Dorsolateral prefrontal cortex (tissue), 120 donors: ENCODE measurements at regions of chr22 and their contacts with region 1.

Region 1: GRCh38 chr22:42780070-42780540 is 59.4 kb upstream of the A4GALT start:
- DNase-seq: peak in 3 of 10 donors; percentile 25 to 66 (median 53)
- H3K4me3 ChIP-seq: no peak overlapping the region
- H3K27ac ChIP-seq: peak overlapping the region in 2 of 59 donors; percentile 27 to 56
- H3K27me3 ChIP-seq: no peaks in the 10 kb centered on the region
- CTCF ChIP-seq: peak; percentile 67 to 91 (median 83)

Region 2: GRCh38 chr22:42820066-42820763 is 40.1 kb after region 1 on chr22:
- intact Hi-C with region 1: loop called in 1 of 2 experiments (anchors 5 kb)
- DNase-seq: no peak
- H3K4me3 ChIP-seq: no peak overlapping the region
- H3K27ac ChIP-seq: peak overlapping the region in 8 of 59 donors; percentile 0 to 44 (median 9)
- H3K27me3 ChIP-seq: no peaks in the 10 kb centered on the region
- CTCF ChIP-seq: peak in 45 of 56 donors; percentile 8 to 84 (median 60)

Region 3: DNA sequence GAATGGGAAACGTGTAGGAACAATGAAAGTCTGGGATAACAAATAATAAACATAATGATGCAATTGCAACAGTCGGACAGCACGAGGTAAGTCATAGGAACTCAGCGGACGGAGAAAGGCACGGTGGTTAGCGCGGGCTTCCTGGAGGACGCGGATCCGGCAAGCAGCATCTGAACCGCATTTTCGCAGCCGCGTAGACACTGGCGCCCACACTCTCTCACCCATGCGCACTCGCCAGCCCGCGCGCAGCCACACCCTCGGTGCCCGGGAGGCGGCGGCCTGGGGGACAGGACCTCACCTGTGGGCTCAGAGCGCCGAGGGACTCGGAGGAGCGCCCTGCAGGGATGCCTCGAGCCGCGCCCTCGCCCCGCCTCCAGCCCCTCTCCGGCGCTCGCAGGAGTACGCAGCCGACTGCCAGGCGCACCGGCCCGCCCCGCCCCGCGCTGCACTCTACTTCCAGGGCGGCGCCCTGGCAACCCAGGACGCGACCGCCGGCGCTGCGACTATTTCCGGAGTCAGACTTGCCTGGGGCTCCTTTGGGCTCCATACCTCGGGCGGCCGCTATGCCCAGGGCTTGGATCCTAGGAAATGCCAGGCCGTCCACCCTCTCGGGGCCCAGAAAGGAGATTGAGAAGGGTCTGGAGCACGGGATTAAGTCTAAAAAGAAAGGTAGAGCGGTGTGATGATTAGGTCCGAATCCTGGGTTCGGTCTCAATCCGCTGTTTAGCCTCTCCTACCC is 309.0 kb after region 1 on chr22 and contains the start of gene TTLL1:
- intact Hi-C with region 1: loop called in 1 of 2 experiments (anchors 10 kb)
- DNase-seq: peak; percentile 75 to 95 (median 86)
- H3K4me3 ChIP-seq: peak within 1 kb of the TSS; percentile 62 to 97 (median 88)
- H3K27ac ChIP-seq: peak within 1 kb of the TSS in 30 of 59 donors; percentile 3 to 85 (median 50)
- H3K27me3 ChIP-seq: no peaks in the 10 kb centered on the region
- CTCF ChIP-seq: peak in 40 of 56 donors; percentile 3 to 51 (median 30)
- total RNA-seq, gene TTLL1: 11.0 to 24.3 (median 16.5) TPM